ENCODE measurements at regions of chr10 and their contacts with region 1.

Region 1: DNA sequence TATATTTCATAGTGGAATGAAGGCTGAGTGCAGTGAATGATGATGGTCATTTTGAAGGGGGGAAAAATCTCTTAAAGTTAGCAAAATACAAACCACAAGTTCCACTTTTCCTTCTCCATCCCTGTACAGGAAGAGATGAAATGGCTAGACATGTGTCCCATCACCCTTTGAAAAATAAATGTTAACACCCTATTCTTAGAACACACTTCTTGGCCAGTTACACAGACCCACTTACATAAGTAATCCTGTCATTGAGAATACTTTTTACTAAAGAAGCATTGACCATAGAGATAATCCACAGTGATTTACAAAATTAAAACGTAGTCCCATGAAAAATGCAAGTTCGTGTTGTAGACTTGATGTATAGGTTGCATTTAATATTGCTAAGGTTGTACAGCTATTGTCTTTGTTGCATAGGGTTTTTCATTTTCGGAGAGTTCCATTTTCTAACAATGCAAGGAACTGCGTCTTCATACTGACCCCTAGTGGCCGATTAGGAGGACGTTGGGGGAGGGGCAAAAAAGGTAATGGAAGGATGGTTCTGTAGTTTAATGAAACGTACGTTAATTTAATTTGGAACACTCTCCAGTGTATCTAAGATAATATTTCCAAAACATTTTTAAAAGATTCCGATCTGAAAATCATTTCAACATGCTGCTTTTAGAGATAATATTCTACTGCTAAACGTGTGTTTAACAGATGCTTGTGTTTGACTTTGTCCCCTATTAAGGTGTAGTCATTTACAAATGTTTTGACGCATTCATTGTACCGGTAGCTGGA is 60.9 kb downstream of the ARMC3 start:
- DNase-seq: peak; percentile 82
- H3K4me3 Mint-ChIP-seq: no peak overlapping the region
- H3K27ac Mint-ChIP-seq: no peak overlapping the region
- H3K4me1 Mint-ChIP-seq: peaks cover 11% of the 10 kb centered on the region
- H3K27me3 Mint-ChIP-seq: no peaks in the 10 kb centered on the region

Region 2: GRCh38 chr10:21278491-21279239 is 1710.1 kb before region 1 on chr10:
- CTCF ChIA-PET with region 1: no interaction called
- intact Hi-C with region 1: loop called (anchors 1 kb)
- DNase-seq: peak; percentile 92
- H3K4me3 Mint-ChIP-seq: no peak overlapping the region
- H3K27ac Mint-ChIP-seq: no peak overlapping the region
- H3K4me1 Mint-ChIP-seq: no peaks in the 10 kb centered on the region
- H3K27me3 Mint-ChIP-seq: no peaks in the 10 kb centered on the region

Region 3: DNA sequence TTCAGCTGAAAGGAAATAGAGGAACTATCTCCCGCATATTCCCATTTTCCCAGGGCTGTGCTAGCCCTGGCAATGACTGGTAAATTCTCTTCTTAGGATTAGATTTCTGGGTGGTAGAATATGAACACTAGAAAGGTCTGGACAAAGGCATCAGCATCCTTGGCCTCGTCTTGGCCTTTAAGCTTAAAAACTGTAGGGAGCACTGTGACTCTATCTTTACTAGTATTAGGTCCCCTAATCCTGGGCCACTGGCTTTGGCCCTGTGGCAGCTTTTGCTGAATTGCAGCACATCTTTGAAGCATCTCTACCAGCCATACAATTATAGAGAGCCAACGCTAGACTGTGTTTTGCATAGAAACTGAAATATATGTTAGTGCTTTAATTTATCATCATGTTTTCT is 729.5 kb before region 1 on chr10:
- CTCF ChIA-PET with region 1: interaction called, 8 read pairs
- intact Hi-C with region 1: loop called (anchors 1 kb)
- DNase-seq: peak; percentile 40
- H3K4me3 Mint-ChIP-seq: no peak overlapping the region
- H3K27ac Mint-ChIP-seq: no peak overlapping the region
- H3K4me1 Mint-ChIP-seq: peaks cover 25% of the 10 kb centered on the region
- H3K27me3 Mint-ChIP-seq: peaks cover 4% of the 10 kb centered on the region

Region 4: DNA sequence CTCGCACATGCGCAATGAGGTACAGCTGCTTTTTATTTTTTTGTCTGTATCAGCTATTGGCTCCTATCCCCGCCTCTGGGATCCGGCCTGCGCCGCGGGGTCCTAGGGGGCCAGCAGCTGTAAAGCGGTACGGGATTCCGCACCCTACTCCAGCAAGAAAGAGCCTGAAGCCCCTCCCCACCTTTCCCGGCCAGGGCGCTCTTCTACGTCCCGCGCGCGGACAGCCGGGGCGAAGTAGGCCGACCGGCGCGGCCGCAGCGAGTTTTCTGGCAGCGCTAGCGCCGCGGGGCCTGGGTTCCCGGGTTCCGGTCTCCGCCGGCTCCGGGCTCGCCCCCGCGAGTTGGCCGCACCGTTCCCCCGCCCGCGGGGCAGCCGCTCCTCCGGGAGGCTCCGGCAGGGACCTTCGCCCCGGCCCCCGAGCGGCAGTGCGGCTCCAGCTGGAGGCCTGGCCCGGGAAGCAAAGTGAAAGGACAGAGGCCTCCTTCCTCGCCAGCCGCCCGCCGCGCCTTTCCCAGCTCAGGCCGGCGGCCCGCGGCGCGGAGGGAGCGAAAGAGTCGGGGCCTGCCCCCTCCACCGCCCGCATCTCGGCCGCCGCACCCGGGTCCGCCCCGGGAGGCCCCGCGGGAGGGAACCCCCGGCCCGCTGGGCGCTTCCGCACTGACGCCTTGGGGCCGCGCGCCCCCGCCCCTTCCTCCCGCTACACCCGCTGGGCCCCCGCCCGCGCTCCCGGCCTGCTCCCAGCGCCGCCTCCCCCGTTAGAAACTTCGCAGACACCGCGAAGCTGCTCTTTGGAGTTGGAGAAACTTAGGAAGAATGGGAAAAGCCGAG is 648.2 kb before region 1 on chr10:
- CTCF ChIA-PET with region 1: interaction called, 4 read pairs
- intact Hi-C with region 1: loop called (anchors 5 kb)
- DNase-seq: peak; percentile 63
- H3K4me3 Mint-ChIP-seq: peak overlapping the region; percentile 88
- H3K27ac Mint-ChIP-seq: peak overlapping the region; percentile 74
- H3K4me1 Mint-ChIP-seq: peaks cover 19% of the 10 kb centered on the region
- H3K27me3 Mint-ChIP-seq: peaks cover 69% of the 10 kb centered on the region

Region 5: DNA sequence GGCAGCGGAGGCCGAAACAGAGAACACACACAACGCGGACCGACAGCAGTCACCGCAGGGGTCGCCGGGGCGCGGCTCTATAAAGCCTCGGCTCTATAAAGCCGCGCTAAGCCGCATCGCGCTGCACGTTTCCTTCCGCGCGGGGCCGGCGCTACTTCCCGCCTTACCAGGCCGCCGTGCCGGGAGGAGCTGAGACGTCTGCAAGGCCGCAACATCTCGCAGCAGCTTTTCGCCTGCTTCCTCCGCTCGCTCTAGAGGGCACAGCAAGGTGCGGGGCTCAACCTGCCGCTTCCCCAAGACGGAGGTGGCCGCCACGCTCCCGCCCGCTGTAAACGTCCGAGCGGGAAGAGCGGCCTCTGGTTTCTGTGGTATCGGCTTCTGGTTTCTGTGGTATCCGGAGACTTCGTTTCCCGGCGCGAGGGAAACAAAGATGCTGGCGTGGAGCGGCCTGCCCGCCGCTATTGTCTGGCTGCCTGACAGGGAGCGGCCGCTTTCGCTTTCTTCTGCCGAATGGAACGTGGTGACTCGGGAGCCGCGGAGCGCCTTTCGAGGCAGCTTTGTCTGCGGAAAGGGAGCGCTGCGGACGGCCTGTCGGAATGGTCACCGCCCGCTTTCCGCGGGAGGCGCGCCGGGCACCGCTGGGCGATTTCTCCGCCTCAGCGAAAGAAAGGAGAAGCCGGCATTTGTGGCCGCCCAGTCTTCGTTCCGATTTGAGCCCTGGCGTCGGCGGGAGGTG is 551.7 kb before region 1 on chr10:
- CTCF ChIA-PET with region 1: no interaction called
- intact Hi-C with region 1: loop called (anchors 2 kb)
- DNase-seq: peak; percentile 84
- H3K4me3 Mint-ChIP-seq: peak overlapping the region; percentile 84
- H3K27ac Mint-ChIP-seq: peak overlapping the region; percentile 92
- H3K4me1 Mint-ChIP-seq: peaks cover 31% of the 10 kb centered on the region
- H3K27me3 Mint-ChIP-seq: no peaks in the 10 kb centered on the region

Region 6: DNA sequence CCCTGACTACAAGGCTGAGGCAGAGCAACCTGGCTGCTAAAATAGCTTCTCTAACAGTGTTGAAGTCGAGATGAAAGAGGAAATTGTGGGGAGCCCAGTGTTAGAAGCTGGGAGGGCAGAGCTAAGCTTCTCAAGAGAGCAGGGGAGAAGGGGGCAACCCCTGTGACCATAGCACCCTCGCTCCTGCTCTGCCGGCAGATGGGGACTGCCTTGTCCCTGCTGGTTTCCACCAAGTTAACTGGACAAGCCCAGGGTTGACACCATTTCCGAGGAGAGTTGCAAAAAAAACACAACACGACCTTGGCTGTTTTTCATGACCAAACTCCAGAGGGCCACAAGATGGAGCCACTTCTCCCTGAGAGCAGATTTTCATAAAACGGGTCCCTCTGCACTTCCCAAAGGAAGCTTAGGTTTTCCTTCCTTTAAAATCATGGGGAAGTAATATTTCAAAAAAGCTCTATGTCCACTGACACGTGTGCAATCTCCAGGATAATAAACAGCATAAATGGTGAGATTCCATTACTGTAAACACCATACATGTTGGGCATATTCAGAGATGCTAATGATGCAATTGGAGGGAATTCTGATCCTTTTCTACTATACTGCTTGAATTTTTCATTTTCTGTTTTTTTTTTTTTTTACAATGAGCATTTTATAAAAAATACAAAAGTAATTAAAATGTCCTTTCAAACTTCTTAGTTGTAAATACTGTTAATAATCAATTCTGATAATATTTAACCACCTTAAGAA is 414.8 kb before region 1 on chr10:
- CTCF ChIA-PET with region 1: interaction called, 40 read pairs
- intact Hi-C with region 1: loop called (anchors 1 kb)
- DNase-seq: peak; percentile 44
- H3K4me3 Mint-ChIP-seq: no peak overlapping the region
- H3K27ac Mint-ChIP-seq: peak overlapping the region; percentile 1
- H3K4me1 Mint-ChIP-seq: peaks cover 37% of the 10 kb centered on the region
- H3K27me3 Mint-ChIP-seq: no peaks in the 10 kb centered on the region

Region 7: DNA sequence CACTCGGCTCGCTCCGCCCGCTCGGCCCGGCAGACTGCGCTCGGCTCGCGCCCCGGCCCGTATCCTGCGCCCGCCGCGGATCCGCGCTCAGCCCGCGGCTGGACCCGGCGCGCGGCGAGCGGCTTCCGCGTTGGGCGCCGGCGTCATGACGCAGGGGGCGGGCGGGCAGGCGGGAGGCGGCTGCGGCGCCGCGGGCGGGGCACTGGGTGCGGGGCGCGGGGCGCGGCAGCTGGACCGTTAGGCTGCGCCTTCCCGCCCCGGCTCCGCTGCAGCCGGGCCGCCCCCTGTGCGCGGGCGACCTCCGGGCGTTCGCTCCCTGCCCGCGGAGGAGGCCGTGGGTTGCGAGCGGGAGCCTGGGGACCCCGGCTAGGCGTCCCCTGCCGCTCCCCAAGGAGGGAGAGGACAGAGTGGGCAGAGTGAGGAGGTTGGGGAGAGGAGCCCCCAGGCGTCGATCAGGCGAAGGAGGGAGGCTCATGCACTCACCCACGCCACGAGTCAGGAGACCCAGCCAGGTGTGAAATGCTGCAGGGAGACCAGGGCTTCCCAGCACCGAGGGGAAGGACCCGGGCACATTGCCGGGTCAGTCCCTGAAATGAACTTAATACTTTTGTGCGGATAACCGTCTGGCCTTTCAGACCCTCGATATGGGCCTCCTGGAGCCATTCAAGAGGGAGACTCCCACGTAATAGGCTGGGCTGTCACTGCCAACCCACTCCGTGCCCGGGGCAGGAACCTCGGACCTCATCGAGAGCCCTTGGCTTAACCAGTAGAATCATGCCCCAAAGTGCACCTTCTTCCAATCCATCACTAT is 274.1 kb before region 1 on chr10 and contains the start of gene PIP4K2A:
- CTCF ChIA-PET with region 1: interaction called, 3 read pairs
- intact Hi-C with region 1: loop called (anchors 5 kb)
- DNase-seq: peak; percentile 74
- H3K4me3 Mint-ChIP-seq: peak within 1 kb of the TSS; percentile 88
- H3K27ac Mint-ChIP-seq: peak within 1 kb of the TSS; percentile 79
- H3K4me1 Mint-ChIP-seq: peaks cover 27% of the 10 kb centered on the region
- H3K27me3 Mint-ChIP-seq: no peaks in the 10 kb centered on the region
- total RNA-seq, gene PIP4K2A: 68.0 to 74.1 TPM

Region 8: GRCh38 chr10:22958338-22958737 is 30.4 kb before region 1 on chr10:
- CTCF ChIA-PET with region 1: no interaction called
- intact Hi-C with region 1: no loop called
- DNase-seq: no peak
- H3K4me3 Mint-ChIP-seq: no peak overlapping the region
- H3K27ac Mint-ChIP-seq: no peak overlapping the region
- H3K4me1 Mint-ChIP-seq: no peaks in the 10 kb centered on the region
- H3K27me3 Mint-ChIP-seq: no peaks in the 10 kb centered on the region